Mammary epithelial cell (primary cell): ENCODE measurements at regions of chr12 and their contacts with region 1.

Region 1: DNA sequence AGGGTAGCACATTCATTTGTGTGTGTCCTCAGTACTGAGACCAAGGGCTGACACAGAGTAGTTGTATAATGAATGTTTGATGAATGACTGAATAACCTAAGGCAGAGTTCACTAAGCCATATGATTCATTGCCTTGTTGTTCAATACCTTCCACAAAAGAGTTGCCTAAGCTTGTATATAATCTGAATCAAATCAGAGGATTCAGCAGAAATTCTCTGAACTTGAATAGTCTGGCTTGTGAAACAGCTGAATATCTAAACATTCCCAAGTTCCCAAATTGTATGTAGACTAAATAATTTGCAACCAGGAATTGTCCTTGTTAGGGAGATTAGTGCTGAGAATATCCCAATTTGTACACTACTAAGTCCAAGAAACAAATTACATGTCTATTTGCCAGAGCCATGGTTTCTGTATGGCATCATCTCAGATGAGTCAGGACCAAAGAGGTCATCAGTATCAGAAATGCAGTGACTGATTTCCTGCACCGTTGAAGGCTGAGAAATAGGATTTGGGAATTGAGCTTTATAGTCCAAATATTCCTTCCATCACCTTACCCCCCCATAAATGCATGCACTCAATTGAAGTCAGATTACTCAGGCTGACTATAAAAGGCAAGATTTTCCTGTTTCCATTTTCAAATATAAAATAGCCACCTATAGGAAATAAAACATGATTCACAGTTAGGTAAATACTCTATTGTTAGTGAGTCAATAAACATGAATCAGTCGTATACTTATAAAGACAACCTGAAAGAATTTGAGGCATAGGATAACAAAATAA is 168.7 kb downstream of the PHLDA1 start:
- DNase-seq: peak; percentile 94
- H3K4me3 ChIP-seq: no peak overlapping the region
- H3K27ac ChIP-seq: peak overlapping the region; percentile 99
- H3K4me1 ChIP-seq: peaks cover 46% of the 10 kb centered on the region
- H3K27me3 ChIP-seq: no peaks in the 10 kb centered on the region
- CTCF ChIP-seq: no peak

Region 2: GRCh38 chr12:75011118-75011517 is 851.8 kb before region 1 on chr12:
- CTCF ChIA-PET with region 1: no interaction called
- dilution Hi-C with region 1: no loop called
- in situ Hi-C with region 1: no loop called
- intact Hi-C with region 1: no loop called
- DNase-seq: peak; percentile 41
- H3K4me3 ChIP-seq: no peak overlapping the region
- H3K27ac ChIP-seq: no peak overlapping the region
- H3K4me1 ChIP-seq: no peaks in the 10 kb centered on the region
- H3K27me3 ChIP-seq: no peaks in the 10 kb centered on the region
- CTCF ChIP-seq: no peak

Region 3: DNA sequence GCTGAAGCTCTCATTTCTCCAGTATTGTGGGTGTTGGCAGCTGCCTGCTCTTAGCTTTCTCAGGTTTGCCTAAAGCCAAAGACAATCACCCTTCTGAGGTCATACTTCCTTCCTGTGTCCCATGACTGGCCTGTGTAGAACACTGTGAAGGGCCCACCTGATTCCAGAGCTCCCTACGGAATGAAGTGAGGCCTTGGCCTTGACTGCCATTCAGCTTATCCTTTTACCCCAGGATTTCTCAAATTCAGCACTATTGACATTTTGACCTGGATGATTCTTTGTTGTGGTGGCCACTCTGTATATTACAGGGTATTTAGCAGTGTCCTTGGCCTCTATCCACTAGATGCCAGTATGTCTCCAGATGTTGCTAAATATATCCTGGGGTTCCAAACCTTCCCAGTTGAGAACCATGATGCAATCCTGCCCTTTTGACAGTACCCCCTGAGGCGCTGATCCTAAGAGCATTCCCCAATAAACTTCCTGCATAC is 239.2 kb before region 1 on chr12:
- CTCF ChIA-PET with region 1: no interaction called
- dilution Hi-C with region 1: no loop called
- in situ Hi-C with region 1: no loop called
- intact Hi-C with region 1: loop called (anchors 2 kb)
- DNase-seq: peak; percentile 53
- H3K4me3 ChIP-seq: no peak overlapping the region
- H3K27ac ChIP-seq: peak overlapping the region; percentile 18
- H3K4me1 ChIP-seq: peaks cover 9% of the 10 kb centered on the region
- H3K27me3 ChIP-seq: no peaks in the 10 kb centered on the region
- CTCF ChIP-seq: peak; percentile 30 to 60

Region 4: DNA sequence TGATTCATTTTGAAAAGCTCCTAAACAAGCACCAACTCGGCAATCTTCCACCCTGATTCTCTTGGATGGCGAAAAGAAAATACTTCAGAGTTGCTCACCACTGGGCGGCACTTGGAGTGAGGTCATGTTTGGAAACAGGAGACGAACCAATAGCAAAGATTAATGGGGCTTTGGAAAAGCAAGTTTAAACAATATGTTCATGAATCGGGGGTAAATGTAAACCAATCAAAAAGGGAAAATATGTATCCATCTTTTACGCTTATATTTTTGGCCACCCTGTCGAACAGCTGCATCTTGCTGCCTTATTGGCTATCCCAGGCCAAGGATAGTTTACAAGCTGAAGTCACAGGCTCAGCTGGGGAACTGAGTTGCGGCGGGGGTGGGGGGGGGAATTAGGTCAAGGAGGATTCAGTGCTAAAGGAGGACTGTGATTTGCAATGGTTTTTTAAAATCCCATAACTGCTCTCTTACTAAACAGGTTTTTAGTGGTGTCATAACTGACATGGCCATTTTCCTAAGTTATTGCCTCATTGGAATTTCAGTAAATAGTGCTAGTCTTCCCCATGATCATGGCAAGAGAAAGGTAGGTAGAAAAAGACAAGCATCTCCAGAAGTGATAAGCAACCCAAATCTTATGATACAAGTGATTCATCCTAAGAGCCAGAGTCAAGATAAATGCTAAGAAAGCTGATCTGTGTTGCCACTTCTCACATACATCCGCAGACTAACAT is 41.9 kb before region 1 on chr12:
- CTCF ChIA-PET with region 1: interaction called, 6 read pairs
- dilution Hi-C with region 1: no loop called
- in situ Hi-C with region 1: no loop called
- intact Hi-C with region 1: loop called (anchors 1 kb)
- DNase-seq: peak; percentile 79
- H3K4me3 ChIP-seq: no peak overlapping the region
- H3K27ac ChIP-seq: peak overlapping the region; percentile 44
- H3K4me1 ChIP-seq: peaks cover 52% of the 10 kb centered on the region
- H3K27me3 ChIP-seq: no peaks in the 10 kb centered on the region
- CTCF ChIP-seq: peak in 1 of 2 donors; percentile 40

Region 5: GRCh38 chr12:75944097-75944904 is 81.4 kb after region 1 on chr12:
- CTCF ChIA-PET with region 1: no interaction called
- dilution Hi-C with region 1: no loop called
- in situ Hi-C with region 1: no loop called
- intact Hi-C with region 1: loop called (anchors 1 kb)
- DNase-seq: peak; percentile 93
- H3K4me3 ChIP-seq: peak overlapping the region in 2 of 3 experiments; percentile 1 to 2
- H3K27ac ChIP-seq: peak overlapping the region; percentile 87
- H3K4me1 ChIP-seq: peaks cover 34% of the 10 kb centered on the region
- H3K27me3 ChIP-seq: no peaks in the 10 kb centered on the region
- CTCF ChIP-seq: no peak

Region 6: DNA sequence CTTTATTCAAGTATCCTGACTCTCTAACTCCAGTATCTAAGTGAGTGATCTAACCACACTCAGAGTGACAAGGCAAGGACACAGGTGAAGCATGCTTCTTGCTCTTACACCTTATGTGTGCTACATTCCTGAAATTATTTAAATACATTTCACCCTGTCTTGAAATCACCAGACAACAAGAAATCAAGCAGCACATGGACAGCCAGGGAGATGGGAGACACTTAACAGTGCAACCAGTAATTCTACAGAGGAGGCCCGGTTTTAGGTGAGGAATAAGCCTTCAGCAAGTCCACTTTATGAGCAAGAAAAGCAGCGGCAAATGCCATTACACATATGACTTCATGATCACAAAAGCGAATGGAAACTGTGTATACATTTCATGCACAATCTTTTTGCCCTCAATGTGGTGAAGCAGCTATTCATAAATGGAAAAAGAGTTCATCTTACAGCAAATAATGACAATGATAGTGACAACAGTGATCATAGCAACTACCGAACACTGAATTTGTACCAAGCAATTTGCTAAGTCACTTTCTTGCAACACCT is 131.4 kb after region 1 on chr12:
- CTCF ChIA-PET with region 1: no interaction called
- dilution Hi-C with region 1: no loop called
- in situ Hi-C with region 1: no loop called
- intact Hi-C with region 1: loop called (anchors 1 kb)
- DNase-seq: no peak
- H3K4me3 ChIP-seq: no peak overlapping the region
- H3K27ac ChIP-seq: peak overlapping the region; percentile 27
- H3K4me1 ChIP-seq: peaks cover 40% of the 10 kb centered on the region
- H3K27me3 ChIP-seq: no peaks in the 10 kb centered on the region
- CTCF ChIP-seq: no peak